B cell (primary cell): ENCODE measurements at regions of chr19 and their contacts with region 1.

Region 1: GRCh38 chr19:58380722-58381466 is at the start of gene ZNF837:
- DNase-seq: peak; percentile 100
- ATAC-seq: peak; percentile 86
- H3K4me3 ChIP-seq: peak within 1 kb of the TSS; percentile 22 to 78 (median 71)
- H3K4me3 Mint-ChIP-seq: peak within 1 kb of the TSS; percentile 92
- H3K27ac ChIP-seq: peak within 1 kb of the TSS; percentile 89 to 97
- H3K27ac Mint-ChIP-seq: peak within 1 kb of the TSS; percentile 95
- H3K4me1 ChIP-seq: peaks cover 27 to 35% of the 10 kb centered on the region in 2 donors
- H3K4me1 Mint-ChIP-seq: peaks cover 32% of the 10 kb centered on the region
- H3K27me3 ChIP-seq: no peaks in the 10 kb centered on the region
- H3K27me3 Mint-ChIP-seq: no peaks in the 10 kb centered on the region
- CTCF ChIP-seq: no peak
- total RNA-seq, gene ZNF837: 3.1 and 4.2 TPM in 2 replicates

Region 2: GRCh38 chr19:58278157-58279041 is 102.5 kb before region 1 on chr19 and contains the start of gene ZNF8:
- CTCF ChIA-PET with region 1: no interaction called
- POLR2A ChIA-PET with region 1: interaction called, 8 read pairs
- intact Hi-C with region 1: loop called (anchors 1 kb)
- DNase-seq: peak; percentile 96
- ATAC-seq: peak; percentile 98
- H3K4me3 ChIP-seq: peak within 1 kb of the TSS; percentile 72 to 98 (median 95)
- H3K4me3 Mint-ChIP-seq: peak within 1 kb of the TSS; percentile 91
- H3K27ac ChIP-seq: peak within 1 kb of the TSS; percentile 73 to 86
- H3K27ac Mint-ChIP-seq: peak within 1 kb of the TSS; percentile 93
- H3K4me1 ChIP-seq: peaks cover 13 to 19% of the 10 kb centered on the region in 2 donors
- H3K4me1 Mint-ChIP-seq: peaks cover 38% of the 10 kb centered on the region
- H3K27me3 ChIP-seq: no peaks in the 10 kb centered on the region
- H3K27me3 Mint-ChIP-seq: no peaks in the 10 kb centered on the region
- CTCF ChIP-seq: no peak
- total RNA-seq, gene ZNF8: 7.9 and 8.0 TPM in 2 replicates

Region 3: DNA sequence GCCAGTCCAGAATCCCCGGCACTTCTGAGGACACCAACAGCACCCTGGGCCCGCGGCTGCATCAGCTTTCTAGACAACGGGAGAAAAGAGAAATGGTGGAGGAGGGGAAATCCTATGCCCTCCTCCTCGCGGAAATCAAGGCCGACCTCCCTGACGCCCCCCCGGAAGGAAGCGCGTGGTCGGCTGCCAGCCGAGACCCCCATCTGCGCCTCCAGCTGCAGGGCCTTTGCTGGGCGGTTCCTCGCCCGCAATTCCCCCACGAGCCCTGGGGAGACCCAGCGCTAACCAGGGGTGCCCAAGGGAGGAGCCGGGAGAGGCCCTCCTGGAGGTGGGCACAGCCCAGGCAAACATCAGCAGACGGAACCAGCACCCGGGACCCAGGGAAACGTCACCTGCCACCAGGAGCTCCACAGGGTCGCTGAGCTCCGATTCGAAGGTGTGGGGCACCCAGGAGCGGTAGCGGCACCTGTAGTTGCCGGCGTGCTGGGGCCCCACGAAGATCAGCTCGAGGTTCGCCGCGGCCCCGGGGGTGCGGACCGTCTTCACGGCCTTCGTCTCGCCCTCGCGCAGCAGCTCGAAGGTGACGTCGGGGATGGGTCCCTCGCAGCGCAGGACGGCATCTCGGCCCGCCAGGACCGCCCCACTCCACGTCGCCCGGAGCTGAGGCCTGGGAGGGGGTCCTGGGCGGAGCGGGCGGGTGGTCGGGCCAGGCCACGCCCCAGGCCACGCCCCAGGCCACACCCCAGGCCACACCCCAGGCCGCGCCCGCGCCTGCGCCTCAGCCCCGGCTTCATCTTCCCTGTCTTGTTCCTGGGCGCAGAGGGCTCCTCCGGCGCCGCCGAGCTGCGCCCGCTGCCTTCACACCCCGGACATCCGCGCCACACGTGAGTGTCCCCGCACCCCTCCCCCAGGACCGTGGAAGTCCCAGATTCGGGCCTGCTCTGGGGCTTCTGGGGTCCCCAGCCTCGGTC is 33.6 kb before region 1 on chr19:
- CTCF ChIA-PET with region 1: interaction called, 3 read pairs
- POLR2A ChIA-PET with region 1: interaction called, 3 read pairs
- intact Hi-C with region 1: loop called (anchors 1 kb)
- DNase-seq: peak; percentile 91
- ATAC-seq: peak; percentile 96
- H3K4me3 ChIP-seq: peak overlapping the region; percentile 47 to 75 (median 62)
- H3K4me3 Mint-ChIP-seq: peak overlapping the region; percentile 96
- H3K27ac ChIP-seq: peak overlapping the region; percentile 59 to 77
- H3K27ac Mint-ChIP-seq: peak overlapping the region; percentile 89
- H3K4me1 ChIP-seq: peaks cover 16 to 28% of the 10 kb centered on the region in 2 donors
- H3K4me1 Mint-ChIP-seq: peaks cover 30% of the 10 kb centered on the region
- H3K27me3 ChIP-seq: no peaks in the 10 kb centered on the region
- H3K27me3 Mint-ChIP-seq: no peaks in the 10 kb centered on the region
- CTCF ChIP-seq: no peak

Region 4: DNA sequence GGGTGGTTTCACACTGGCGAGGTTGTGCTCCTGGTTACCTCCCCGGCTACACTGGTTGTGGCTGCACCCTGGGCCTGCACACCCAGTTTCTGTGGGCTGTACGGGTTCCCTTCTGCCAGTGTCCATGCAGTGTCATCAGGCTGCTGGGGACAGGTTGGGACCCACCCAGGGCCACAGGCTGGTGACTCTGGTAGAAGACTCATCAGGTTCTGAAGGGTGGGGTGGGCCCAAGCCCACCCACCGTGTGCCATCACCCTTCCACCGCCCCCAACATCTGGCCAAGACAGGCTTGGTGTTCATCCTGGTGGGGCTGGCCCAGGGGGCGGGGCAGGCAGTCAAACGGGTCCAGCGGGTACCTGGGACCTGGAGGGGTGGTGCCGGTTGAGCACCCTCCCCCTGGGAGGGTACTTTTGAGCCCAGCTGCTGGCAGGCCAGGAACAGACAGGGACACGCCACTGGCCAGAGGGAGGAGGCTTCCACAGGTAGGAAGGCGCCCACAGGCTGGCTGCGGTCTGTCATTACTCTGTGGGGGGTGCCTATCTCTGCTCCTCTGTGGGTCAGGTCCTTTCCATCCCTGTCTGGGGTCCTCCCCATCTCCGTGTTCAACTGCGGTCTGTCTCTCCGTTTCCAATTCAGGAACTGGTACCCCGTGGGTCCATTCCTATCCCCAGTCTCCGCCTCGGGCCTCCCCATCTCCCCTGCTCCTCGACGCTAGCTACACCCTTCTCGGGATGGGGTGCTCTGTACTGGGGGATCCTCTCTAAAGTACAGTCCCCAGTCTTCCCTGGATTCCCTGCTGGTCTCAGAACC is 14.5 kb after region 1 on chr19 and contains the start of gene RNF225:
- CTCF ChIA-PET with region 1: no interaction called
- POLR2A ChIA-PET with region 1: no interaction called
- intact Hi-C with region 1: no loop called
- DNase-seq: peak; percentile 36
- ATAC-seq: peak; percentile 9
- H3K4me3 ChIP-seq: no peak within 1 kb of the TSS
- H3K4me3 Mint-ChIP-seq: no peak within 1 kb of the TSS
- H3K27ac ChIP-seq: no peak within 1 kb of the TSS
- H3K27ac Mint-ChIP-seq: no peak within 1 kb of the TSS
- H3K4me1 ChIP-seq: peaks cover 5 to 8% of the 10 kb centered on the region in 2 donors
- H3K4me1 Mint-ChIP-seq: peaks cover 5% of the 10 kb centered on the region
- H3K27me3 ChIP-seq: peaks cover 0 to 27% (median 10%) of the 10 kb centered on the region in 4 experiments
- H3K27me3 Mint-ChIP-seq: no peaks in the 10 kb centered on the region
- CTCF ChIP-seq: no peak
- total RNA-seq, gene RNF225: 0.49 TPM in 1 of 2 replicates, not detected in the other

Region 5: DNA sequence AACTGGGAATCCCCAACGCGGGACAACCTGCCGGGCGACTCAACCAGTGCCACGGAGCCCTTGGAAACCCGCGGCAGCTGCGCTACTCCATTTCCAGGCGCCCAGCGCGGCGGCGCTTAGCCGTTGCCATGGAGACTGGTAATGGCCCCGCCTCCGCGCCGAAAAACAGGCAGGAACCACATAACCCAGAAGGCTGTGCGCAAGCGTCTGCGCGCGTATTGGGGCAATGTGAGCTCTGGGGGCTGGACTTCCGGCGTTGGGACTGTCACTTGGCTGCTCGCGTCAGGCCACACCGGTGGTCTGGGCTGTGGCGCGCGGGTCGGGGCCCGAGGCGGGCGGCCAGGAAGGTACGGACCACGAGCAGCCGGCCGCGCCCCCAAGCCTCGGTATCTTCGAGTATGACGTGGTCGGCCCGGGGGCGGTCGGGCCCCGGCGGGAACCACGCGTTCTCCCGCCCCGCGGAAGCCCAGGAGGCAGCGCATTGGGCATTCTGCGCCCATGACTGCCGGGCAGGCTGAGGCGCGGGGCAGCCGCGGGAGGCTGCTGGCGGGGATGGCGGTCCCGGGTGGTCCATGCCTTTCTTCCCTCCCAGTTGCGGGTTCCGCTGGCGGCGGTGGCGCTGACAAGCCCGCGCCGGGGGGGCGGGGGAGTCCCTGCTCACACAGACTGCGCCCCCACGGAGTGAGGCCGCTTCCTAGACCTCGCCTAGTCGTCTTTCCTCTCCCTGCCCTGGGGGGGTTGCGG is 70.6 kb after region 1 on chr19 and contains the start of gene ZNF324B:
- CTCF ChIA-PET with region 1: no interaction called
- POLR2A ChIA-PET with region 1: no interaction called
- intact Hi-C with region 1: loop called (anchors 1 kb)
- DNase-seq: peak; percentile 97
- ATAC-seq: peak; percentile 97
- H3K4me3 ChIP-seq: peak within 1 kb of the TSS; percentile 55 to 81 (median 73)
- H3K4me3 Mint-ChIP-seq: peak within 1 kb of the TSS; percentile 93
- H3K27ac ChIP-seq: peak within 1 kb of the TSS in 1 of 2 donors; percentile 66
- H3K27ac Mint-ChIP-seq: peak within 1 kb of the TSS; percentile 85
- H3K4me1 ChIP-seq: peaks cover 5 to 12% of the 10 kb centered on the region in 2 donors
- H3K4me1 Mint-ChIP-seq: peaks cover 20% of the 10 kb centered on the region
- H3K27me3 ChIP-seq: peaks cover 0 to 24% (median 2%) of the 10 kb centered on the region in 4 experiments
- H3K27me3 Mint-ChIP-seq: peaks cover 13% of the 10 kb centered on the region
- CTCF ChIP-seq: no peak
- total RNA-seq, gene ZNF324B: 15.0 and 17.4 TPM in 2 replicates

Region 6: GRCh38 chr19:58519355-58520256 is 138.7 kb after region 1 on chr19 and contains the start of gene ZBTB45:
- CTCF ChIA-PET with region 1: no interaction called
- POLR2A ChIA-PET with region 1: interaction called, 5 read pairs
- intact Hi-C with region 1: loop called (anchors 2 kb)
- DNase-seq: peak; percentile 96
- ATAC-seq: peak; percentile 84
- H3K4me3 ChIP-seq: peak within 1 kb of the TSS; percentile 64 to 78 (median 71)
- H3K4me3 Mint-ChIP-seq: peak within 1 kb of the TSS; percentile 98
- H3K27ac ChIP-seq: peak within 1 kb of the TSS; percentile 76 to 96
- H3K27ac Mint-ChIP-seq: peak within 1 kb of the TSS; percentile 99
- H3K4me1 ChIP-seq: peaks cover 18 to 28% of the 10 kb centered on the region in 2 donors
- H3K4me1 Mint-ChIP-seq: peaks cover 42% of the 10 kb centered on the region
- H3K27me3 ChIP-seq: no peaks in the 10 kb centered on the region
- H3K27me3 Mint-ChIP-seq: no peaks in the 10 kb centered on the region
- CTCF ChIP-seq: peak; percentile 72
- total RNA-seq, gene ZBTB45: 20.9 and 28.4 TPM in 2 replicates